MCF 10A (cell line): ENCODE measurements at regions of chr3 and their contacts with region 1.

Region 1: DNA sequence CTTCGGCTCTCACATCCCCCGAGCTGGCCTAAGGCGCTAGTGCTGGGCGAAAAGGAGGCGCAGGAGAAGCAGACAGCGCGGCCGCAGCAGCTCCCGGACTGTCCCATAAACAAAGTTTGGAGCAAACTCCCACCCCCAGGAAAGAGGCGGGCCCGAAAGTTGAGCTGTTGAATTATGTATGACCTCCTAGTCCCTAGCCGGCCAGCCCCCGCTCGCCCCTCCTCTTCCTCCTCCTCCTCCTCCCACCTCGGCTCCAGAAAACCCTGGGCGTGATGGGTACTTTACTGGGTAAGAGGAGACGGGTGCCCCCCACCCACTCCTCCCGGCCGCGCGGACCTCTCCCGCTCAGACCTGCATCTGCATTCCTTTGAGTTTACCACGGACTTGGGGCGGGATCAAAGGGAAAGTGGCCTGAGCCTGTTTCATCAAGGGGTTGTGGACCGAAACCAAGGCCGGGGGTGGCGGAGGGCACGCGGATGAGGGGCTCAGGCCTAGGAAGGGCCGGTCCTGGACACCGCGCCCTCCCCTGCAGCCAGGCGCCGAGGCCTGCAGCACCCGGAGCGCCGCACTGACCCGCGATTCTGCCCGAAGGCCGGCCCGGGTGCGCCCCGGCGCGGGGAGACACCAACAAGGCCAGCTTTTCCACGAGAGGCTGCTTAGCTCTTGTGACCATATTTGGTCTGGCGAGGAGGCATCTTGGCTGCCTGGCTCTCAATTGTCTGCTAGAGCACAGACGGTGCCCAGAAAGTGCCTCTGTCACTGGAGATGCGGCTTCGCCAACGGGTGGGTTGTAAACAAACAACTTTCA is at the start of gene WWTR1:
- DNase-seq: peak; percentile 99
- H3K4me3 Mint-ChIP-seq: peak within 1 kb of the TSS; percentile 100
- H3K27ac Mint-ChIP-seq: peak within 1 kb of the TSS; percentile 99
- H3K4me1 Mint-ChIP-seq: peaks cover 30% of the 10 kb centered on the region
- H3K27me3 Mint-ChIP-seq: no peaks in the 10 kb centered on the region
- CTCF ChIP-seq: peak; percentile 15
- total RNA-seq, gene WWTR1: 52.9 and 54.9 TPM in 2 replicates

Region 2: DNA sequence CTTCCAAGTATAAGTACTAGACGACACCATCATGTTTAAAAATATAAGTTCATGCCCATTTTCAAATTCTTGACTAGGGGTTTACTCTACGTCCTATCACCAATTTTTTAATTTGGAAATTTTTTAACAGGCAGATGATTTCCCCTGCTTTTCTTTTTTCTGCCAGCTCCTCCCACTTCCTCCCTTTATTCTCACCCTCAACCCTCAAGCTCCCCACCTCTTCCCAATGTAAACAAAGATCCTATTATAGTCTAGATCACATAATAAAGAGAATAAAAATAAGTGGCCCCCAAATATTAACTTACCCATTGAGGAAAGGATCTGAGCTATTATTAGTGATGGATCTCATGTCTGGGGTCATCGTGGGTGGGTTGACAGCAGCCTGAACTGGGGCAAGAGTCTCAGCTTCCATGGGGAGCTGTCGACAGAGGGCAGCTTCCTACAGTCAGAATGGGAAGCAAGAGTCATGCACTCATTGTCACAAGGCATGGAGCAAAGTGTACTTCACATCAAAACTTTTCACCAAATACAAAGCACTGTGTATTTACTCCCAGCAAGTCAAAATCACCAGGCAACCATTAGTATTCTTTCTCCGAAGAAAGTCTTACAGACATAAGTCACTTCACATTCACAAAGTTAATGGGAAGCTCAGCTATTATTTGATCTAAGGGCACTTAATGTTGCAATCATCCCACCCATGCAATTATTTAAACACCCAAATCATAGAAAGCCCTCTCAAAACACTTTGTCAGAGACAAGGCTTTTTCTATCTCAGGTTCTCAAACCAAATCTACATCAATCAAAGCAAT is 130.4 kb before region 1 on chr3:
- CTCF ChIA-PET with region 1: interaction called, 32 read pairs
- POLR2A ChIA-PET with region 1: interaction called, 11 read pairs
- intact Hi-C with region 1: loop called (anchors 1 kb)
- DNase-seq: no peak
- H3K4me3 Mint-ChIP-seq: no peak overlapping the region
- H3K27ac Mint-ChIP-seq: peak overlapping the region; percentile 20
- H3K4me1 Mint-ChIP-seq: peaks cover 6% of the 10 kb centered on the region
- H3K27me3 Mint-ChIP-seq: no peaks in the 10 kb centered on the region
- CTCF ChIP-seq: no peak

Region 3: GRCh38 chr3:149553781-149554451 is 104.2 kb before region 1 on chr3:
- CTCF ChIA-PET with region 1: interaction called, 5 read pairs
- POLR2A ChIA-PET with region 1: interaction called, 19 read pairs
- intact Hi-C with region 1: no loop called
- DNase-seq: no peak
- H3K4me3 Mint-ChIP-seq: no peak overlapping the region
- H3K27ac Mint-ChIP-seq: peak overlapping the region; percentile 82
- H3K4me1 Mint-ChIP-seq: peaks cover 26% of the 10 kb centered on the region
- H3K27me3 Mint-ChIP-seq: no peaks in the 10 kb centered on the region
- CTCF ChIP-seq: no peak

Region 4: DNA sequence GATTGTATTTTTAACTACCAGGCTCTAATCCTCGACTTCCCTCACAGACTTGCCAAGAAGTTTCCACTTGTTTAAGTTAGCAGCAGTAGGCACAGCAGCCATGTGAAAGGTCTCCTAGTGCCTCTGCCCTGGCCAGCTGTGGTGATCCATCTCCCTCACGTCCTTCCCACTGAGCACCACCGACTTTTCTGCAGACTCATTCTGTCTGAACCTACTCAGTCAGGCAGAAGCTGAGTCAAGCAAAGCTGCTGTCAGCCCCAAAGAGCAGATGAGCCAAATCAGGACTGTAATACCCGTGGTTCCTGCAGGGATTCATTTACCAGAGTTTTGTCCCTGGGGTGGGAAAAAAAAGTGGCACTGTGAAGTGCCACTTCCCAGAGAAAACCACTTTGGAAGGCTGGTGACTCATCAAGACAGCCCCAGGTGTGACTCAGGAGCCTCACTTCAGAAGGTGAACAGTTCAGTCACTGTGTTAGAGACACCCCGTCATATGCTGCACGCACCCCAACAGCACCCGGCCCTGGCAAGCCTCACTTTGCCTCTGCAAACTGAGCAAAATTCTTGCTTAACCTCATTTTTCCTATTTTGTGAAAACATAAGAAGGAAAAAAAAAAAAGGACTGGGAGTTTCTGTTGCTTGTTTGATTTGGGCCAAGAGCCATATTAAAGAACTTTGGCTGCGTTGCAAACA is 76.3 kb before region 1 on chr3:
- CTCF ChIA-PET with region 1: interaction called, 6 read pairs
- POLR2A ChIA-PET with region 1: interaction called, 59 read pairs
- intact Hi-C with region 1: no loop called
- DNase-seq: peak; percentile 90
- H3K4me3 Mint-ChIP-seq: peak overlapping the region; percentile 26
- H3K27ac Mint-ChIP-seq: peak overlapping the region; percentile 77
- H3K4me1 Mint-ChIP-seq: peaks cover 52% of the 10 kb centered on the region
- H3K27me3 Mint-ChIP-seq: no peaks in the 10 kb centered on the region
- CTCF ChIP-seq: no peak

Region 5: GRCh38 chr3:149638228-149639092 is 19.7 kb before region 1 on chr3:
- CTCF ChIA-PET with region 1: interaction called, 3 read pairs
- POLR2A ChIA-PET with region 1: interaction called, 20 read pairs
- intact Hi-C with region 1: no loop called
- DNase-seq: no peak
- H3K4me3 Mint-ChIP-seq: no peak overlapping the region
- H3K27ac Mint-ChIP-seq: peak overlapping the region; percentile 51
- H3K4me1 Mint-ChIP-seq: peaks cover 20% of the 10 kb centered on the region
- H3K27me3 Mint-ChIP-seq: no peaks in the 10 kb centered on the region
- CTCF ChIP-seq: no peak

Region 6: DNA sequence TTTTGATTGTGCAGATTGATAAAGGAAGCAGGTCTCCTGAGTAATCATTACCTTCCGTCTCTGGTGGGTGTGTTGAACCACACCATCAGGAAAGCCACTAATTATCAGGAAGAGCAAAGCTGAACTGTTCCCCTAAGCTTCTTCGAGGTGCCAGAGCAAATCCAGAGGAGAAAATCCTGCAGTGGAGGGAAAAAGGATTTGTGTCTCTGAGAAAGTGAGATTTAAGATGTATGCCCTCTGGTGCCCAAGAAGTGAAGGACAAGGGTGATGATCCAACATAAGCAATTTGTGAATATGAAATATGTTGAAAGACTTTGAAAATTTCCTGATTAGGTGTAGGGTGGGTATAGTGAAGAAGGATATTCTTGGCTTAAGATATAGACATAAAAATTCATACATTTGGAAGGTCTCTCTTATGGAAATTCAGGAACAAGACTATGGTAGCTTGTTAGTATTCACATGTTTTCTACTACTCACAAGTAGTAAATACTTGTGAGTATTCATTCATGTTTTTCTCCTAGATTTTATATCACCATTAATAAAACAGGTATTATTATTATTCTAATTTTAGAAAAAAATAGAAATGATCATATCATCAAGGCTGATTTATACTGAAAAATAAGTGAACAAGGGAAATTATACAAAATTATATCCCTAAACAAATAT is 59.4 kb after region 1 on chr3:
- CTCF ChIA-PET with region 1: interaction called, 16 read pairs
- POLR2A ChIA-PET with region 1: interaction called, 5 read pairs
- intact Hi-C with region 1: loop called (anchors 1 kb)
- DNase-seq: peak; percentile 76
- H3K4me3 Mint-ChIP-seq: no peak overlapping the region
- H3K27ac Mint-ChIP-seq: no peak overlapping the region
- H3K4me1 Mint-ChIP-seq: no peaks in the 10 kb centered on the region
- H3K27me3 Mint-ChIP-seq: no peaks in the 10 kb centered on the region
- CTCF ChIP-seq: peak; percentile 66

Region 7: DNA sequence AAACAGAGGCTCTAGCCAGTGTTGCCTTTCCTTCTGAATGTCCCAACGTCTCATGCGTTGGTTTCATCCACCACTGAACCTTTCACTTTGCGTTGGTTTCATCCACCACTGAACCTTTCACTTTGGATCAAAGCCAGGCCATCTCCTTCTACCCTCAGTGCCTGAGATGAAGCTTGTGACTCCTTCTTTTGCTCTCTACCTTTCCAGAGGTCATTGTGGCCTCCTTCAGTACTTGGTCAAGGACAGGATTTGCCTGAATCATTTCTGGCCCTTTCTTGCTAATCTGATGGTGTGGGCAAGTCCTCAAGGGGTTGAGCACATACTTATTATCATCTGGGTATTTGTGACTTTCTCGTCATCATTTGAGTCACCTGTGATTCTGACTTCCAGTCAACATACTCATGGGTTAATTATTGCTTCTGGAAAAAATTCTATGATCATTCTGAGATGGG is 995.0 kb after region 1 on chr3:
- CTCF ChIA-PET with region 1: no interaction called
- POLR2A ChIA-PET with region 1: no interaction called
- intact Hi-C with region 1: no loop called
- DNase-seq: no peak
- H3K4me3 Mint-ChIP-seq: no peak overlapping the region
- H3K27ac Mint-ChIP-seq: no peak overlapping the region
- H3K4me1 Mint-ChIP-seq: no peaks in the 10 kb centered on the region
- H3K27me3 Mint-ChIP-seq: no peaks in the 10 kb centered on the region
- CTCF ChIP-seq: no peak